Heart right ventricle (tissue), 16 donors: ENCODE measurements at regions of chrX and their contacts with region 1.

Region 1: GRCh38 chrX:49922291-49923241 is at the start of gene CLCN5:
- DNase-seq: peak; percentile 93 to 95
- ATAC-seq: peak; percentile 98 to 99 (median 99)
- H3K4me3 ChIP-seq: peak within 1 kb of the TSS; percentile 44 to 83 (median 72)
- H3K27ac ChIP-seq: peak within 1 kb of the TSS in 9 of 10 donors; percentile 57 to 84 (median 77)
- H3K4me1 ChIP-seq: peaks cover 0 to 22% (median 5%) of the 10 kb centered on the region in 9 donors
- H3K27me3 ChIP-seq: peaks cover 0 to 19% (median 0%) of the 10 kb centered on the region in 7 donors
- CTCF ChIP-seq: no peak
- total RNA-seq, gene CLCN5: 0.83 to 3.6 (median 1.6) TPM

Region 2: DNA sequence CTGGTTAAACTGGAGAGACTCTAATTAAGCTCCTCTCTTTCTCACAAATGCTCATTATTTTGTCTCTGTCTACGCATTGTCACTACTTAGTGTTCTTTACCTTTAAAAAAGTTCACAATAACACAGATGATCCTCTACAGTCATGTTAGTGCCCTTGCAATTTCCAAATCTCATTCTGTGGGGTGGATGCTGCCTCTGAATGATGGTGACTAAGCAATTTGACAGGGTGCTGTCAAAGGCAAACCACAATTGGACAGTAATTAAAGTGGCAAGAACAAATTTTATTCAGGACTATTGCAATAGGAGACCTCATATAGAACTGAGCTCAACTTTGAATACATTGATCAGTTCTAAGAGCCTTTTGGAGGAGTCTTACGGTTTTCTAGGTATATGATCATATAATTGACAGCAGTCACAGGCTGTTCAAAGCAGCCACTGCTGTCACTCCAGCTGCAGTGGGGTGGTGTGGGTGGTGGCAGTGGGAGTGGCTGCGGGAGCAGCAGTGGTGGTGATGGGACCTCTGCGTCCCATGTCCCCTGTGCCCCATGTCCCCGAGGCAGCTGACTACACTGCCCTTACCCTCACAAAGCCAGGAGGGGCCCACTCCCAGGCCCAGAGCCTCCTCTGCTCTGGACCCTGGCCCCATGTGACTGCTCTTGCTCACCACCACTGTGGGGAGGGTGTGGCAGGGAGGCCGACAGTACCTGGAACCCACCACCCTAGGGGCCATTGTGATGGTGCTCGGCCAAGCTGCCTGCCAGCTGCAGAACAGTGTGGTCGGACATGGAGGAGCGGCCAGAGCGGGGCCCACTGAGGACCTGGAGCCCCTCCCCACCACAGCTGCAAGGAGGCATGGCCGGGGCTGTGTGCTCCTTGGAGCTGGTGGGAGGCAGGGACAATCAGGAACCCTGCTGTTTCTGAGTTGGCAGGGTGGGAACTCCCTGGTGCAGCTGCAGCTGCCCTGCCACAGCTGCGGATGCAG is 196.4 kb before region 1 on chrX:
- intact Hi-C with region 1: no loop called
- DNase-seq: no peak
- ATAC-seq: no peak
- H3K4me3 ChIP-seq: no peak overlapping the region
- H3K27ac ChIP-seq: no peak overlapping the region
- H3K4me1 ChIP-seq: no peaks in the 10 kb centered on the region
- H3K27me3 ChIP-seq: peaks cover 0 to 5% (median 0%) of the 10 kb centered on the region in 7 donors
- CTCF ChIP-seq: no peak

Region 3: DNA sequence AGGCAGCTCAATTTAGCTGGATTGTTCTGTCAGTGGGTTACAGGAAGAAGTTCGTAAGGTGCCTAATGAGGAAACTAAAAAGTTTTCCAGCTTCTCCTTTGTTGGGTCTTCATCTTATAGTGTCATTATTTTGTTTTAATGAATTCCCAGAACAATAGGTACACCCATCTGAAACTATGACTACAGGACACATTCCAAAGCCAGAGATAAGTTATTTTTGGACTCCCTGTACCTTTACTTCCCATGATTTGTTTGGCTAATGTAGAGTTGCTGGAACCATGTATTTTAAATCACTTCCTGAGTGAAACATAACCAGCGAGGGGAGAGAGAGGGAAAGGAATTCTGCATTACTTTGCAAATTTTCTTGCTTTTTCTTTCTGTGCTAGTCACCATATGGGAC is 113.9 kb after region 1 on chrX:
- intact Hi-C with region 1: loop called in 1 of 10 experiments (anchors 5 kb)
- DNase-seq: no peak
- ATAC-seq: peak in 5 of 8 donors; percentile 54 to 78 (median 60)
- H3K4me3 ChIP-seq: peak overlapping the region in 5 of 10 donors; percentile 6 to 27 (median 25)
- H3K27ac ChIP-seq: peak overlapping the region in 5 of 10 donors; percentile 21 to 53 (median 42)
- H3K4me1 ChIP-seq: peaks cover 0 to 18% (median 4%) of the 10 kb centered on the region in 9 donors
- H3K27me3 ChIP-seq: peaks cover 0 to 7% (median 0%) of the 10 kb centered on the region in 7 donors
- CTCF ChIP-seq: no peak